ENCODE measurements at regions of chrX and their contacts with region 1.

Region 1: DNA sequence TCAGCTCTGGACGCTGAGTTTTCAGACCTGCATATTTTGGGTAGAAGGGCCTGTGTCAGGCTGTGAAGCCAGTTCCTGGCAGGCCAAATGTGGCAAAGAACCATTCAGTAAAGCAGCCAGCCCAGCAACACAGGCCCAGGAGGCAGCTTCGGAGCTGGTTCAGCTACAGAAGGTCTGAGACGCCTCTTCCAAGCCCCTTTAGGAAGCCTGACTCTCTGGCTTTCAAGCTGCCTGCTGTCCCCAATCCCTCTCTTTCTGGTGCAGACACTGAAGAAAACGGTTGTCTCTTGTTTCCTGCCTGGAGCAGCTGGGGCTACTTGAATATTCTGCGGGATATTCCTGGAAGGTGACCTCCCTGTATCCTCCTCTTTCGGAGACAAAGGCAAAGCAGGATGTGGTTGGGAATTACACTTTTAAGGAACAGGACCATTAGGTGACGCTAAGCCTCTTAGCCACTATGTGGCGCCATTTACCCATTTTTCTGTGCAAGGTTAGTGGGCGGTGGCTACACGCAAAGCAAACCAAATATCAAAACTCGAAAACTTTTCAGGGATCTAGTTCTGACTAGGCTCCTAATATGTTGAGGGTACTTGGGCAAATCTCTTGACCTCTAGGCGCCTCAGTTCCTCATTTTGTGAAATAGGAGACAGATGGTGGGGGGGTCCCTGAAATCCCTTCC is 47.2 kb upstream of the LAS1L start:
- DNase-seq: peak; percentile 22
- H3K4me3 Mint-ChIP-seq: no peak overlapping the region
- H3K27ac Mint-ChIP-seq: no peak overlapping the region
- H3K4me1 Mint-ChIP-seq: peaks cover 7% of the 10 kb centered on the region
- H3K27me3 Mint-ChIP-seq: no peaks in the 10 kb centered on the region

Region 2: DNA sequence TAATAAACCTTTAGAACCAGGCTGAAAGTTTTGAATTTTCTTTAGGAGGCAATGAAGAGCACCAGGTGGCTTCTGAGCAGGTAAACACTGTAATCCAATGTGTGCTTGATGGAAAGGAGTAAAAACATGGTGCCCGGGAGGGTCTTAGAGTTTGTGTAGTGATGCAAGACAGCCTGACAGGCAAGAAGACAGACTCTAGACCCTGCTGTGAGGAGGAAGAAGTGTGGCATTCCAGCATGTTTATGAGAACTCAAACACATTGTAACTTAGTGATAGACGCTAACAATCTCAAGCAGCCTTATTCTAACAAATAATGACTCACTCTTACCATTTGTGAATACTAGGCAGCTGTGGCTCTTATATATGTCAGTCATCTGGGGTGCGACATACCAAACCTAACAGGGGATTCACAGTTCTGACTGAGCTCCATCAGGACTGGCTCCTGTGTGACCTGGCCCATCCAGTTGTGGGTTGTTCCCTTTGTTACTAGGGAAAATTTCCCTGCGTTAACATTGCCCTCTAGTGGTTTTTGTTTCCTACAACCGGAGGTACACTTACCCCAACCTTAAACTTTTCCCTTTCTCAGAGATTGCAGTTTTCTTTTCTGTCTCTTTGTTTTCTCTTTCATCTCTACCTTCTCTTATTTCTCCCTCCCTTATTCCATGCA is 404.3 kb after region 1 on chrX:
- intact Hi-C with region 1: loop called (anchors 2 kb)
- DNase-seq: peak; percentile 10
- H3K4me3 Mint-ChIP-seq: no peak overlapping the region
- H3K27ac Mint-ChIP-seq: no peak overlapping the region
- H3K4me1 Mint-ChIP-seq: peaks cover 18% of the 10 kb centered on the region
- H3K27me3 Mint-ChIP-seq: no peaks in the 10 kb centered on the region

Region 3: GRCh38 chrX:66110112-66110511 is 528.3 kb after region 1 on chrX:
- intact Hi-C with region 1: loop called (anchors 10 kb)
- DNase-seq: no peak
- H3K4me3 Mint-ChIP-seq: no peak overlapping the region
- H3K27ac Mint-ChIP-seq: no peak overlapping the region
- H3K4me1 Mint-ChIP-seq: peaks cover 6% of the 10 kb centered on the region
- H3K27me3 Mint-ChIP-seq: no peaks in the 10 kb centered on the region

Region 4: GRCh38 chrX:66408507-66408906 is 826.7 kb after region 1 on chrX:
- intact Hi-C with region 1: loop called (anchors 5 kb)
- DNase-seq: no peak
- H3K4me3 Mint-ChIP-seq: no peak overlapping the region
- H3K27ac Mint-ChIP-seq: no peak overlapping the region
- H3K4me1 Mint-ChIP-seq: no peaks in the 10 kb centered on the region
- H3K27me3 Mint-ChIP-seq: no peaks in the 10 kb centered on the region

Region 5: GRCh38 chrX:66728818-66729271 is 1147.0 kb after region 1 on chrX:
- intact Hi-C with region 1: loop called (anchors 2 kb)
- DNase-seq: peak; percentile 32
- H3K4me3 Mint-ChIP-seq: peak overlapping the region; percentile 92
- H3K27ac Mint-ChIP-seq: peak overlapping the region; percentile 90
- H3K4me1 Mint-ChIP-seq: peaks cover 2% of the 10 kb centered on the region
- H3K27me3 Mint-ChIP-seq: no peaks in the 10 kb centered on the region